B cell (primary cell): ENCODE measurements at regions of chr2 and their contacts with region 1.

Region 1: GRCh38 chr2:37698931-37699481 is 27.6 kb upstream of the CDC42EP3 start:
- DNase-seq: no peak
- ATAC-seq: no peak
- H3K4me3 ChIP-seq: no peak overlapping the region
- H3K4me3 Mint-ChIP-seq: no peak overlapping the region
- H3K27ac ChIP-seq: no peak overlapping the region
- H3K27ac Mint-ChIP-seq: no peak overlapping the region
- H3K4me1 ChIP-seq: no peaks in the 10 kb centered on the region
- H3K4me1 Mint-ChIP-seq: no peaks in the 10 kb centered on the region
- H3K27me3 ChIP-seq: no peaks in the 10 kb centered on the region
- H3K27me3 Mint-ChIP-seq: peaks cover 4% of the 10 kb centered on the region
- CTCF ChIP-seq: no peak

Region 2: DNA sequence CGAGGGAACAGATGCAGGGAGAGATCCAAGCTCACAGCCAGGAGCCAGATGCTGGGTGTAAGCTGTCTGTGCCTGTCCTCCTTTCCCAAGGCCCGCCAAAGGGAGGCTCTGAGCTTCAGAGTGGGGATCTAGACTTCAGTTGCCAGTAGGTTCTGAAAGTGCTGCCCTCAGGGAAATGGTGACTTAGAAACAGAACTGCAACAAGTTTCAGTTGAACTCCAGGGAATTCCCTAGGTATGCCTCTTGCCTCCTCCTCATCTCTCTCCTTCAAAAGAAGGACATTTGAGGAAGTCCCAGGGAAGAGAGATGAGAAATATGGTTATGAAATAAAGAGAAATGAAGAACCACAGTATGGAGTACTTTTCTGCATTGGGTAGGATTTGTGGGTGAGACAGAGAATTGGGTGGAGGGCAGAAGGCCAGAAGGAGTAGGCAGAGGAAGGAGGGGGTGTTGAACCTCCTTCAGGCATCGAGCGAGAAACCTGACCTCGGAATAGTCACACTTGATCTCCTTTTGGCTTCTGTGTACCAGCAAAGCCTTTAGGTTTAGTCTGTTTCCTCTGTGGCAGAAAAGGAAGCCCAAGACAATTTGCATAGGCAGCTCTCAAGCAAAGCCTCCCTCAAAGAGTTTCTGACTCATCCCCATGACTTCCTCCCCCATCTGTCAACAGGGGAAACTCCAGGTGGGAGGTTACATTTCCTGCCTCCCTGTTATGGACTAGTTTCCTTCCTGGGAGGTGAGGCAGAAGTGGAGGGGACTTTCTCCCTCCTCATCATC is 308.8 kb before region 1 on chr2:
- CTCF ChIA-PET with region 1: no interaction called
- POLR2A ChIA-PET with region 1: no interaction called
- intact Hi-C with region 1: no loop called
- DNase-seq: peak; percentile 91
- ATAC-seq: peak; percentile 93
- H3K4me3 ChIP-seq: peak overlapping the region in 1 of 5 experiments; percentile 40
- H3K4me3 Mint-ChIP-seq: peak overlapping the region; percentile 81
- H3K27ac ChIP-seq: peak overlapping the region; percentile 91 to 93
- H3K27ac Mint-ChIP-seq: no peak overlapping the region
- H3K4me1 ChIP-seq: peaks cover 37 to 38% of the 10 kb centered on the region in 2 donors
- H3K4me1 Mint-ChIP-seq: peaks cover 3% of the 10 kb centered on the region
- H3K27me3 ChIP-seq: no peaks in the 10 kb centered on the region
- H3K27me3 Mint-ChIP-seq: no peaks in the 10 kb centered on the region
- CTCF ChIP-seq: no peak

Region 3: DNA sequence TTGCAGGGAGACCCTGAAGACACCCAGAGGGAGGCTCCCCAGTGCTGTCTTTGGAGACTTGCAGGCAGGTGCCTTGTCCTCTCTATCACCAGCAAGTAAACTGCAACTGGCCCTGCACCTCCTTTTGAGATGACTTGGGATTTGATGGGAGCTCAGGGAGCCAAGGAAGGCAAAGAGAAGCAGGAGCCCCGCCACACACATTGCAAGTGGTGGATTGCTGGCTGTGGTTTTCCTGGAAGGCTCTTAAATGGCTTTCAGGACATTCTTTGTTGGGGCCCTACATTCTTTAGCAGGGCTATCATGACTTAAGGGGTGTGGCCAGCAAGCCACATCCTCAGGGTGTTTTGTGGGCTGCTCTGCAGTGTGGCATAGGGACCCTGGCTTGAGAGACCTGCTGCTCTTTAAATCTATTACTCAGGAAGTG is 12.3 kb after region 1 on chr2:
- CTCF ChIA-PET with region 1: no interaction called
- POLR2A ChIA-PET with region 1: no interaction called
- intact Hi-C with region 1: loop called (anchors 2 kb)
- DNase-seq: no peak
- ATAC-seq: no peak
- H3K4me3 ChIP-seq: no peak overlapping the region
- H3K4me3 Mint-ChIP-seq: no peak overlapping the region
- H3K27ac ChIP-seq: no peak overlapping the region
- H3K27ac Mint-ChIP-seq: peak overlapping the region; percentile 39
- H3K4me1 ChIP-seq: peaks cover 24 to 39% of the 10 kb centered on the region in 2 donors
- H3K4me1 Mint-ChIP-seq: peaks cover 45% of the 10 kb centered on the region
- H3K27me3 ChIP-seq: no peaks in the 10 kb centered on the region
- H3K27me3 Mint-ChIP-seq: no peaks in the 10 kb centered on the region
- CTCF ChIP-seq: no peak